ENCODE measurements at regions of chr4 and their contacts with region 1.

Region 1: GRCh38 chr4:53132132-53132896 is 233.5 kb downstream of the SCFD2 start:
- DNase-seq: peak; percentile 26
- H3K4me3 Mint-ChIP-seq: no peak overlapping the region
- H3K27ac Mint-ChIP-seq: peak overlapping the region; percentile 38
- H3K4me1 Mint-ChIP-seq: peaks cover 27% of the 10 kb centered on the region
- H3K27me3 Mint-ChIP-seq: no peaks in the 10 kb centered on the region

Region 2: DNA sequence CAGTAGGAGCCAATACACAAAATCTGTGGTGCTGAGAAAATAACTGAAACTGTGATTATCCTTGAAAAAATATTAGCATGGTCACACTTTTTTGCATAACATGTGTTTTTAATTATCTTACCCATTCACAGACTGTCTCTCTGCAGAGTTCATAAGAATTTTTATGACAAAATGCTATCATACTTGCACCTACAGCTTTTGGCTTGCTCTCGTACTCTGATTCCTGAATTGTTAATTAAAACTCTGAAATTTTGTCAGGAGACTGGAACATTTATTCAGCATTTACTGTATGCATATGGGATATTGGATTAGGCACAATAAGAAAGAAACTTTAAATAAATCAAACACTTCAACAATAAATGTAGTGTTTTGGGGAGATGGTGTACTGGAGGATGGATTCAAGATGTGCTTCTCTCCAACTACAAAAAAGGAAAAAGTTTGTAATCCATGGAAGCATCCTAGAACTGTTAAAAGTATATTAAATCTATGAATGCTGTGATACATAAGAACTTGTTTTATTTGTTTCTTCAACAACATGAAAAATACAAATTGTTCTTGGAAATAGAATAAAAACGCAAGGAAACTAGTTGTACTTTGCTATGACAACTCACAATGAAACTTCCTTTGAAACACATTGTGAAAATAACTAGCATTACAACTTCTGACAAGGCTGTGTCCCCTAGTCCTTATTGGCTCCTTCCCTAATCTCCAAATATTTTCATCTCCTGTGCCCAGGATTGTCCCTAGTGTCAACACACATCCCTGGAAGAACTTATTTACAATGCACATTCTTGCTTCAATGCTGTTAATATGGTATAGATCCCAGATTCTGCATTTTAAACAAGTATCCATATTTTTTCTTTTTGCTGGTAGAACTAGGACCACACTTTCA is 820.6 kb before region 1 on chr4:
- CTCF ChIA-PET with region 1: no interaction called
- POLR2A ChIA-PET with region 1: no interaction called
- intact Hi-C with region 1: no loop called
- DNase-seq: no peak
- H3K4me3 Mint-ChIP-seq: no peak overlapping the region
- H3K27ac Mint-ChIP-seq: no peak overlapping the region
- H3K4me1 Mint-ChIP-seq: no peaks in the 10 kb centered on the region
- H3K27me3 Mint-ChIP-seq: peaks cover 2% of the 10 kb centered on the region

Region 3: GRCh38 chr4:52643785-52644244 is 488.5 kb before region 1 on chr4:
- CTCF ChIA-PET with region 1: no interaction called
- POLR2A ChIA-PET with region 1: no interaction called
- intact Hi-C with region 1: loop called (anchors 10 kb)
- DNase-seq: no peak
- H3K4me3 Mint-ChIP-seq: no peak overlapping the region
- H3K27ac Mint-ChIP-seq: no peak overlapping the region
- H3K4me1 Mint-ChIP-seq: peaks cover 57% of the 10 kb centered on the region
- H3K27me3 Mint-ChIP-seq: no peaks in the 10 kb centered on the region

Region 4: DNA sequence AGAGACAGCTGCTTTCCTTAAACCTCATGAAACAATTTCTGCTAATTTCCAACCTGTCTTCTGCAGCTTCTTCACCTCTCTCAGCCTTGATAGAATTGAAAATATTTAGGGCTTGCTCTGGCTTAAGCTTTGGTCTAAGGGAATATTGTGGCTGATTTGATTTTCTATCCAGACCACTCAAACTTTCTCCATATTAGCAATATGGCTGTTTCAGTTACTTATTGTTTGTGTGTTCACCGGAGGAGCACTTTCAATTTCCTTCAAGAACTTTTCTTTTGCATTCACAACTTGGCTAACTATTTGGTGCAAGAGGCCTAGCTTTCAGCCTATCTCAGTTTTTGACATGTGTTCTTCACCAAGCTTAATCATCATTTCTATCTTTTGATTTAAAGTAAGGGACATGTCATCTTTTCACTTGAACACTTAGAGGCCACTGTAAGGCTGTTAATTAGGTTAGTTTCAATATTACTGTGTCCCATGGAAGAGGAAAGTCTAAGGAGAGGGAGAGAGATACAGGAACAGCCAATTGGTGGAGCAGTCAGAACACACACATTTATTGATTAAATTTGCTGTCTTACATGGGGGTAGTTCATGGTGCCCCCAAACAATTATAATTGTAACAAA is 57.0 kb before region 1 on chr4:
- CTCF ChIA-PET with region 1: no interaction called
- POLR2A ChIA-PET with region 1: no interaction called
- intact Hi-C with region 1: loop called (anchors 1 kb)
- DNase-seq: no peak
- H3K4me3 Mint-ChIP-seq: no peak overlapping the region
- H3K27ac Mint-ChIP-seq: no peak overlapping the region
- H3K4me1 Mint-ChIP-seq: peaks cover 8% of the 10 kb centered on the region
- H3K27me3 Mint-ChIP-seq: no peaks in the 10 kb centered on the region

Region 5: DNA sequence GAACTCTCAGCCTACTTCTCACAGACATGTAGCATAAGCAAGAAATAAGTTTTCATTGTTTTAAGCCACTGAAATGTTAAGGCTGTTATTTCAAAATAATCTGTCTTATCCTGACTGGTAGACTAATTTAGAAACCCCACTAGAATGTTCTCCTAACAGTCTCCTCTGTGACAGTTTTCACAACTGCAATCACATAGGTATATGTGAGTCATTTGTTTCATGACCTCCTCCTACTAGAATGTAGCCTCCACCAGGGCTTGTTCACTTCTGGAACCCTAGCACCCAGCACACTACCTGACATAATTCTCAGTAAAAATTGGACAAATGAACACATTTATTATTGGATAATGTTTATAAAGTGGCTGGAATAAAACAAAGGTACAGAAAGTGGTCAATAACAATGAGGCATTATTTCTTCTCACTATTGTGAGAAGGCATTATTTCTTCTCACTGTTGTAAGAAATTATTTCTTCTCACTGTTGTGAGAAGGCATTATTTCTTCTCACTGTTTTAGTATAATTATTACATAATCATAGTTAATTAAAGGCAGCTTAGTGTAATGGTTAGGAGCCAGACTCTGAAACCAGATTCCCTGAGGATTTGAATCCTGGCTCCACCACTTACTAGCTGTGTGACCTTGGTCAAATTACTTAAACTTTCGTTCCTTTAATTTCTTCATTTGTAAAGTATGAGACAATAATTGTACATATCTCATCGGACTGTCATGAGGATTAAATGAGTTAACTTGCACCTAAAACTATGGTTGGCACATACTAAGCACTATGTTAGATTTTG is 18.7 kb before region 1 on chr4:
- CTCF ChIA-PET with region 1: no interaction called
- POLR2A ChIA-PET with region 1: interaction called, 4 read pairs
- intact Hi-C with region 1: loop called (anchors 1 kb)
- DNase-seq: peak; percentile 24
- H3K4me3 Mint-ChIP-seq: no peak overlapping the region
- H3K27ac Mint-ChIP-seq: peak overlapping the region; percentile 69
- H3K4me1 Mint-ChIP-seq: peaks cover 32% of the 10 kb centered on the region
- H3K27me3 Mint-ChIP-seq: no peaks in the 10 kb centered on the region

Region 6: GRCh38 chr4:53365486-53366300 is 233.4 kb after region 1 on chr4 and contains the start of gene SCFD2:
- CTCF ChIA-PET with region 1: no interaction called
- POLR2A ChIA-PET with region 1: no interaction called
- intact Hi-C with region 1: loop called (anchors 10 kb)
- DNase-seq: peak; percentile 99
- H3K4me3 Mint-ChIP-seq: peak within 1 kb of the TSS; percentile 96
- H3K27ac Mint-ChIP-seq: peak within 1 kb of the TSS; percentile 94
- H3K4me1 Mint-ChIP-seq: peaks cover 39% of the 10 kb centered on the region
- H3K27me3 Mint-ChIP-seq: peaks cover 5% of the 10 kb centered on the region
- total RNA-seq, gene SCFD2: 18.8 to 19.9 TPM

Region 7: GRCh38 chr4:54064295-54065111 is 932.2 kb after region 1 on chr4 and contains the start of gene CHIC2:
- CTCF ChIA-PET with region 1: no interaction called
- POLR2A ChIA-PET with region 1: no interaction called
- intact Hi-C with region 1: loop called (anchors 1 kb)
- DNase-seq: peak; percentile 97
- H3K4me3 Mint-ChIP-seq: peak within 1 kb of the TSS; percentile 92
- H3K27ac Mint-ChIP-seq: peak within 1 kb of the TSS; percentile 95
- H3K4me1 Mint-ChIP-seq: peaks cover 38% of the 10 kb centered on the region
- H3K27me3 Mint-ChIP-seq: no peaks in the 10 kb centered on the region
- total RNA-seq, gene CHIC2: 11.2 to 11.8 TPM